ENCODE measurements at regions of chr13 and their contacts with region 1.

Region 1: DNA sequence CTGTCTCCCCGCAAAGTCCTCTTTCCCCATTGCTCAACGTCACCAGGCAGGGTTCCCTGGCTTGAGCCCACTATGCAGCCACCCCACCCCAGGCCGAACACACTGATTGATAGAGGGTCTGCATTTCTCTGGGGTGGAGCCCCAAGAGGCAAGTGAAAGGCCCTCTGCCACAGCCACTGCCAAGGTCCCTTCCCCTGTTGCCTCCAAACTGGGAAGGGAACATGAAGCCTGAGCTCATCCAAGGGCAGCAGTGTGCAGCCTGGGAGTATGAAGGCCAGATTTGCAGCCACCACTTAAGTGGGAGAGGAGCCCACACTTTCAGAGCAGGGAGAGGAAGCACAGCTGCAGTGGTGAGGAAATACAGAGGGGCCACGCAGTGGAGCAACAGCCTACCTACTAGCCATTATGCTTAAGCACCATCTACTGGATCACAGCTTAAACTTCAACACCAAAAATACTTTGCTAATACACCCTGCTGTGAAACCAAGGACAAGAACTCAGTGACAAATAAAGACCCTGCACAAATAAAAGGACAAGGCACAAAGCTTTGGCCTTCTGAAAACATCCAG is 48.6 kb downstream of the UBL3 start:
- DNase-seq: no peak
- H3K4me3 Mint-ChIP-seq: no peak overlapping the region
- H3K27ac Mint-ChIP-seq: no peak overlapping the region
- H3K4me1 Mint-ChIP-seq: peaks cover 23% of the 10 kb centered on the region
- H3K27me3 Mint-ChIP-seq: no peaks in the 10 kb centered on the region

Region 2: DNA sequence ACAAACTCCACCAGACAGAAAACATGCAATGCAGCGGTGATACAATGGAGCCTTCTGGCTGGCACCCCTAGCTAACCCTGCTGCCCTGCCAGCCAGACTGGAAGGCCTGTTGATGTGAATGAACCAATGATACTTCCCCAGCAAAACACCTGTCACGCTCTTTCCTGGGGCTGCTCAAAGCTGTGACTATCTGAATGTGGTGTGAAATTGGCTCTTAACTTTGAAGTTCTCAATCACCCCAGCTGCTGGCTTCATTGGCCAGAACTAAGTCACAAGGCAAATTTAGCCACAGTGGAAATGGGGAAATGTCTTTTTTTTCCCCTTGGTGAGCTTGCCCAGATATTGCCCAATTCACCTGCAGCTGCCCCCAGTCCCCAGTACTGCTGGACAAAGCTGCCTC is 353.6 kb before region 1 on chr13:
- CTCF ChIA-PET with region 1: no interaction called
- intact Hi-C with region 1: no loop called
- DNase-seq: no peak
- H3K4me3 Mint-ChIP-seq: no peak overlapping the region
- H3K27ac Mint-ChIP-seq: no peak overlapping the region
- H3K4me1 Mint-ChIP-seq: no peaks in the 10 kb centered on the region
- H3K27me3 Mint-ChIP-seq: peaks cover 6% of the 10 kb centered on the region

Region 3: GRCh38 chr13:29693275-29693961 is 108.4 kb before region 1 on chr13:
- CTCF ChIA-PET with region 1: no interaction called
- intact Hi-C with region 1: no loop called
- DNase-seq: no peak
- H3K4me3 Mint-ChIP-seq: no peak overlapping the region
- H3K27ac Mint-ChIP-seq: no peak overlapping the region
- H3K4me1 Mint-ChIP-seq: no peaks in the 10 kb centered on the region
- H3K27me3 Mint-ChIP-seq: peaks cover 8% of the 10 kb centered on the region

Region 4: DNA sequence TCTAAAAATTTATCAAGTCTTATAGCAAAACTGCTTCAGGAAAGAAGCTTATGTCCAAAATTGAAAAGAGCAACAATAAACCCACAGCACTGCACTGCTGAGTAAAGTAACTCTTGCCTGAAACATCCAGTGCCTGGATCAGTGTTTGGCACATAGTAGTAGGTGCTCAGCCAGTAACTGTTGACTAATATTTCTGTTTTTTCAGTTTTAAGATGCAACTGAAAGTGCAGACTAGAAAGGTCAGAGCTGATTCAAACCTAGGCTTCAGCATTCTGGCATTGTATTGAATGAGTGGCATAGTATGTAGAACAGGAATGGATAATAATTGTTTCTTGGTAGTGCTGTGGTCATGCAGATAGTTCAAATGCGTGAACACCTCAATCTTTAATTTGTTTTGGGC is 19.0 kb before region 1 on chr13:
- CTCF ChIA-PET with region 1: no interaction called
- intact Hi-C with region 1: loop called (anchors 2 kb)
- DNase-seq: peak; percentile 39
- H3K4me3 Mint-ChIP-seq: no peak overlapping the region
- H3K27ac Mint-ChIP-seq: no peak overlapping the region
- H3K4me1 Mint-ChIP-seq: peaks cover 16% of the 10 kb centered on the region
- H3K27me3 Mint-ChIP-seq: no peaks in the 10 kb centered on the region

Region 5: GRCh38 chr13:29835280-29836061 is 33.6 kb after region 1 on chr13:
- CTCF ChIA-PET with region 1: no interaction called
- intact Hi-C with region 1: loop called (anchors 1 kb)
- DNase-seq: no peak
- H3K4me3 Mint-ChIP-seq: no peak overlapping the region
- H3K27ac Mint-ChIP-seq: no peak overlapping the region
- H3K4me1 Mint-ChIP-seq: peaks cover 55% of the 10 kb centered on the region
- H3K27me3 Mint-ChIP-seq: no peaks in the 10 kb centered on the region